ENCODE measurements at regions of chr11 and their contacts with region 1.

Region 1: DNA sequence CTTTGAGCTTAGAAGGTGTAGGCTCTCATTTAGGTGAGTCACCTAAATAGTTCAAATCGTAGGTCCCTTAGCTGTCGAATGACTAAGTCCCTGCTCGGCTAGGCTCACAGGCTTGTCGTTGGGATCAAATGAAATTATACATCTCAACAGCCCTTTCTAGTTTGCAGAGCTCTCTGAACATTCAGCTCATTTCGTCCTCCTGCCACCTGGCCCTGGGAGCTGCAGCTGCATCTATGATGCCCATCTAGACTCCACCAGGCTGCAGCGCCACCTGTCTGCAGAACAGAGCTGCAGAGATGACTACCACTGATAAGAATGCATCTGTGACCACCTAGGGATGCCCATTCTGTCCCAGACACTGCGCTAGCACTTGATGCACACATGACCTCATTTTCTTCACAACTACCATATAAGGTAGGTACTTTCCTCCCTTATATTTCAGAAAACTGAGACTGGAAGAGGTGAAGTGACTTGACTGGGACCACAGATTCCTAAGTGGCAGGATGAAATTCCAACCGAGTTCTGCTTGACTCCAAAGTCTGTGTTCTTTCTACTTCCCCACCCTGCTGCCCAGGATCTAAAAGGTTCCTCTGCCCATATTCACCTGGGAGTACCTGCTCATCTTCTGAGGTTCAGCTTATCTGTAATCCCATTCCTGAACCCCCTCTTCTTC is 141.1 kb upstream of the NARS2 start:
- DNase-seq: peak; percentile 95
- H3K4me3 ChIP-seq: no peak overlapping the region
- H3K27ac ChIP-seq: peak overlapping the region; percentile 41
- H3K4me1 ChIP-seq: peaks cover 24% of the 10 kb centered on the region
- H3K27me3 ChIP-seq: no peaks in the 10 kb centered on the region
- CTCF ChIP-seq: peak; percentile 72 to 87

Region 2: DNA sequence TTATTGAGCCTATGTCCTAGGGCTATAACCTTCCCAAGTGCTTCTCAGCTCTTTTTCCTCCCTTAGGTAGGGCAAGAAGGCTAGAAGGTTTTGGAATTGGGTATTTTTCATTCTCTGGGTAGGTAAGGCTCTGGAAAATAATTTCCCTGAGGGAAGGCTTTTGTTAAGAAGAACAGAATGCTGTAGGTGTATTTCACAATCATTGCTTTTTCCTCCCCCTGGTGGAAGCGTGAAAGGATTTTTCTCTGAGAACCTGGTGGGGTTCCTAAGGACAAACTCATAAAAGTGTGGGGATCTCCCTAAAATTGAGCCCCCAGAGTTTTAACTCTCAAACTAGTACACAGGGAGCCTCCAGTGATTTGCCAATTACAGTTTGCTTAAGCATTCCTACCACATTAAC is 100.1 kb before region 1 on chr11:
- CTCF ChIA-PET with region 1: no interaction called
- dilution Hi-C with region 1: no loop called
- in situ Hi-C with region 1: no loop called
- intact Hi-C with region 1: no loop called
- DNase-seq: no peak
- H3K4me3 ChIP-seq: no peak overlapping the region
- H3K27ac ChIP-seq: no peak overlapping the region
- H3K4me1 ChIP-seq: no peaks in the 10 kb centered on the region
- H3K27me3 ChIP-seq: no peaks in the 10 kb centered on the region
- CTCF ChIP-seq: peak in 1 of 2 donors; percentile 35

Region 3: DNA sequence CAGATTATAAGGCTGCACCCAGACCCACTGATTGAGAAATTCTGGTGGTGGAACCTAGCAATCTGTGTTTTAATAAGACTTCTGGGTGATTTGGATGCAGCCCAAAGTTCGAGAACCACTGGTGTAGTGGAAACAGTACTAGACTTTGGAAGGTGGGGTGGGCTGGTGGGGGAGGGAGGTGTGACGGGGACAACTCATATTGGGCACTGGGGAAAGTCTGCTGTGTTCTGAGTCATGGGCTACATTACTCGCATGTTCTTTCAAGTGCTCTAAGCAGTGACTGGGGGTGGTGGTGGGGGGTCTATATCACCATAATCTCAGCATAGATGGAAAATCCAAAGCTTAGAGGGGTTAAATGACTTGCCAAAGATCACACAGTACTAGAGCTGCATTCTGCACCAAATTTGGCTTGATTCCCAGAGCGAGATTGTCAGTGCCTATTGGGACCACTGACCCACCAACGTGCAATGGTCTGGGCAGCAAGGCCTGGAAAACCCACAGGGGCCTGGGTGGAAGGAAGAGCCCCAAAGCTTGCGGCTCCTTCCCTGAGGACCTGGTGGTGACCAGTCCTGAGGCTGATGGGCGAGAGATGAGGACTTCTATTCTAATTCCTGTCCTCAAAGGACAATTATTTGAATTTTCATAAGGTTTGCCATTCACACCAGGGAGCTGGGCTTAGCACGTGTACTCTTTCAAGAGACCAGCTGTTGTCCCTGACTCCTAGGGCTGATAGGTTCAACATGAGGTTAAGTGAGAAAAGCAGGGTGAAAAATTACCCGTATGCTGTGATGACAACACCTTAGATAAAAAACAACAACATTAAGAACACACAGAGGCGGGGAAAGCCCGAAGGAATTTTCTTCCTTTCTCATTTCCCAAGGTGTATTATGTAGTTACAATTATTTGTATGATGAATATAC is 63.6 kb before region 1 on chr11:
- CTCF ChIA-PET with region 1: interaction called, 94 read pairs
- dilution Hi-C with region 1: no loop called
- in situ Hi-C with region 1: loop called (anchors 5 kb)
- intact Hi-C with region 1: no loop called
- DNase-seq: no peak
- H3K4me3 ChIP-seq: no peak overlapping the region
- H3K27ac ChIP-seq: no peak overlapping the region
- H3K4me1 ChIP-seq: no peaks in the 10 kb centered on the region
- H3K27me3 ChIP-seq: no peaks in the 10 kb centered on the region
- CTCF ChIP-seq: no peak

Region 4: GRCh38 chr11:78798660-78799059 is 82.9 kb after region 1 on chr11:
- CTCF ChIA-PET with region 1: interaction called, 10 read pairs
- dilution Hi-C with region 1: no loop called
- in situ Hi-C with region 1: no loop called
- intact Hi-C with region 1: no loop called
- DNase-seq: peak; percentile 11
- H3K4me3 ChIP-seq: no peak overlapping the region
- H3K27ac ChIP-seq: no peak overlapping the region
- H3K4me1 ChIP-seq: peaks cover 19% of the 10 kb centered on the region
- H3K27me3 ChIP-seq: no peaks in the 10 kb centered on the region
- CTCF ChIP-seq: peak; percentile 81 to 83

Measured in mammary epithelial cell (primary cell).